Activated T-helper 1 cell treated with anti-CD3 and anti-CD28 coated beads, Interleukin-12 subunit alpha, Interleukin-12 subunit beta, Interleukin-2, Interleukin-4 antibody, amounts not matched to agents 30 ng/mL and 10 ng/mL and 1 ng/mL, durations not matched to agents 14 hours and 24 hours and 36 hours (primary cell): ENCODE measurements at regions of chr2 and their contacts with region 1.

Region 1: GRCh38 chr2:222813177-222813843 is 47.5 kb upstream of the ACSL3 start:
- DNase-seq: no peak
- H3K4me3 Mint-ChIP-seq: peak overlapping the region; percentile 10
- H3K27ac Mint-ChIP-seq: peak overlapping the region; percentile 94
- H3K4me1 Mint-ChIP-seq: peaks cover 27% of the 10 kb centered on the region
- H3K27me3 Mint-ChIP-seq: peaks cover 7% of the 10 kb centered on the region

Region 2: GRCh38 chr2:222637067-222637466 is 176.2 kb before region 1 on chr2:
- intact Hi-C with region 1: no loop called
- DNase-seq: no peak
- H3K4me3 Mint-ChIP-seq: no peak overlapping the region
- H3K27ac Mint-ChIP-seq: no peak overlapping the region
- H3K4me1 Mint-ChIP-seq: peaks cover 7% of the 10 kb centered on the region
- H3K27me3 Mint-ChIP-seq: no peaks in the 10 kb centered on the region

Region 3: GRCh38 chr2:222747526-222748160 is 65.7 kb before region 1 on chr2:
- intact Hi-C with region 1: loop called (anchors 2 kb)
- DNase-seq: no peak
- H3K4me3 Mint-ChIP-seq: no peak overlapping the region
- H3K27ac Mint-ChIP-seq: no peak overlapping the region
- H3K4me1 Mint-ChIP-seq: peaks cover 23% of the 10 kb centered on the region
- H3K27me3 Mint-ChIP-seq: no peaks in the 10 kb centered on the region

Region 4: GRCh38 chr2:222776792-222777191 is 36.5 kb before region 1 on chr2:
- intact Hi-C with region 1: no loop called
- DNase-seq: no peak
- H3K4me3 Mint-ChIP-seq: no peak overlapping the region
- H3K27ac Mint-ChIP-seq: no peak overlapping the region
- H3K4me1 Mint-ChIP-seq: no peaks in the 10 kb centered on the region
- H3K27me3 Mint-ChIP-seq: peaks cover 14% of the 10 kb centered on the region

Region 5: DNA sequence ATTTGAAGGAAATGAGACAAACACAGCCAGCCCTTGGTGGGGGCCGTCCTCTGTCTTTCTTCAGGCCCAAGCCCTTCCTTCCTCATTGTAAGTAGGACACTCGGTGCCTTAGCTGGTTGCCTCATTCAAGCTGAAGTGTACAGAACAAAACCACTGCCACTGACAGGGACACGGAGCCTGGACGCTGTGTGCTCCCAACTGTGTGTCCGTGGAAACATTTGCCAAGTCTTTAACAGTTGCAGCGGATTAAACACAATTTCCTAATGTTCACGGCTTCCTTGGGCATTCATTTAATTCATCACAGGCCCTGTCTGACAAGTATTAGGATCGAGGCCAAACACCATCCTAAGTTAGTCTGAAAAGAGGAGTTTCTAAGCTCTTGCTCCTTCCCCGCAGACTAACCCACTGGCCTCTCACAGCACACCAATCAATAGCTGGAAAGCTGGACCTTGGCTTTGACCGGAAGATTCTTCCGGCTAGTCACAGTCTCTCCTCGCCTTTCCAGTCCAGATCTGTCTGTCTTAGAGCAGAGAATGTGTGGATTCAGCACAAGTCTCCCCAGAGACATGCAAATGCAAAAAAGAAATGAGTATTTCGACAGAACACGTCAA is 21.2 kb before region 1 on chr2:
- intact Hi-C with region 1: loop called (anchors 1 kb)
- DNase-seq: no peak
- H3K4me3 Mint-ChIP-seq: no peak overlapping the region
- H3K27ac Mint-ChIP-seq: no peak overlapping the region
- H3K4me1 Mint-ChIP-seq: peaks cover 14% of the 10 kb centered on the region
- H3K27me3 Mint-ChIP-seq: peaks cover 20% of the 10 kb centered on the region

Region 6: DNA sequence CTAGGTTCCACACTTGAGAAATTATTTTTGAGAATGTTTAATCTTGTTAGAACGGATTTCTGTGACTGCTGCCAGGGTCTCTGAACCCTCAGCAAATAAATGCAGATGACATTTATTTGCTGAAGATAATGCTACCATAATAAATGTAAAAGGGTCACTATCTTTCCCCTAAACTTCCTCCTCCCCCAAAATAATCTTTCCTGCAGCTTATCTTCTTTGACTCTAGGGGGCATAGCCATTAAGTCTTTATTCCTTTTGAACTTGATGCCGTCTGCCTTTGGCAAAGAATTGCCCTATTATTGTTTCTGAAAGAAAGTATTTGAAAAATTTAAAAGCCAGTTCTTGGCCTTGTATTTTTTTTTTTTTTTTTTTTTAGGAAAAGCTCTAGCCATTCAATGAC is 16.0 kb before region 1 on chr2:
- intact Hi-C with region 1: loop called (anchors 2 kb)
- DNase-seq: no peak
- H3K4me3 Mint-ChIP-seq: no peak overlapping the region
- H3K27ac Mint-ChIP-seq: no peak overlapping the region
- H3K4me1 Mint-ChIP-seq: no peaks in the 10 kb centered on the region
- H3K27me3 Mint-ChIP-seq: peaks cover 10% of the 10 kb centered on the region